Vagina (tissue), 2 donors: ENCODE measurements at regions of chr10 and their contacts with region 1.

Region 1: GRCh38 chr10:23095404-23095965 is at the start of gene MSRB2:
- DNase-seq: no peak
- H3K4me3 ChIP-seq: peak within 1 kb of the TSS; percentile 55 to 92
- H3K27ac ChIP-seq: peak within 1 kb of the TSS; percentile 95
- H3K4me1 ChIP-seq: peaks cover 24% of the 10 kb centered on the region
- H3K27me3 ChIP-seq: no peaks in the 10 kb centered on the region
- CTCF ChIP-seq: no peak
- POLR2A ChIP-seq: peak in 1 of 2 donors; percentile 94
- total RNA-seq, gene MSRB2: 15.2 TPM

Region 2: GRCh38 chr10:21533467-21534279 is 1561.8 kb before region 1 on chr10 and contains the start of gene MLLT10:
- intact Hi-C with region 1: loop called (anchors 10 kb)
- DNase-seq: peak in 1 of 2 donors; percentile 93
- H3K4me3 ChIP-seq: peak within 1 kb of the TSS; percentile 96 to 97
- H3K27ac ChIP-seq: peak within 1 kb of the TSS; percentile 96
- H3K4me1 ChIP-seq: peaks cover 40% of the 10 kb centered on the region
- H3K27me3 ChIP-seq: no peaks in the 10 kb centered on the region
- CTCF ChIP-seq: peak in 2 of 3 experiments; percentile 3 to 37
- POLR2A ChIP-seq: peak in 1 of 2 donors; percentile 86
- total RNA-seq, gene MLLT10: 53.3 TPM

Region 3: DNA sequence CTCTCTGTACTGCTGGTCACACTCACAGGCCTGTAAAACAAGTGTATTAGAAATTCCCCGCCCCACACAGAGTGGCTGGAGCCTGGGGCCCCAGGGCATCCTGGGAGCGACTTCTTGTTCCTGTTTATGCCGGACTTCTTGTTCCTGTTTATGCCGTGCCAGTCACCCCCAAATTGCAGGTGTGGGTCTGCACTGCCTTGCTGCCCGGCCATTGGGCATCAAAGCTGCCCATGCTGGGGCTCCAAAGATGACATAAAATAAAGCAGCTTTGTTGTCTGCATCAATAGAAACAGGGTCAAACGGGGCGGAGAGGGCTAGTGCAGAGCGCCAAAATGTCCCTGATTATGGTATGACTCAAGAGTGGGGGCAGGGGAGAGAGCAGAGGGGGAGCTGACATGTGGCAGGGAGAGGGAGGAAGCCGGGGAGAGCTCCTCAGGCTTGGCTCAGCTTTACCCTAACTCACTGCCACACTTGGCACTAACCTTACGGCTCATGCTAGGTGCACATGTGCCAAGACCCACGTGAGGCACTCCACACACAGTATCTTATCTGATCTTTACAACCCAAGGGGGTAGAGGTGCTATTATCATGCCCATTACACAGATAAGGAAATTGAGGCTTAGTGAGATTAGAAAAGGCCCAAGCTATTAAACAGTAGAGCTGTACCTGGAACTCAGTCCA is 479.5 kb before region 1 on chr10:
- intact Hi-C with region 1: no loop called
- DNase-seq: no peak
- H3K4me3 ChIP-seq: peak overlapping the region in 1 of 2 donors; percentile 3
- H3K27ac ChIP-seq: no peak overlapping the region
- H3K4me1 ChIP-seq: peaks cover 53% of the 10 kb centered on the region
- H3K27me3 ChIP-seq: no peaks in the 10 kb centered on the region
- CTCF ChIP-seq: no peak
- POLR2A ChIP-seq: no peak

Region 4: GRCh38 chr10:22837351-22837750 is 258.1 kb before region 1 on chr10:
- intact Hi-C with region 1: no loop called
- DNase-seq: no peak
- H3K4me3 ChIP-seq: no peak overlapping the region
- H3K27ac ChIP-seq: no peak overlapping the region
- H3K4me1 ChIP-seq: no peaks in the 10 kb centered on the region
- H3K27me3 ChIP-seq: no peaks in the 10 kb centered on the region
- CTCF ChIP-seq: no peak
- POLR2A ChIP-seq: no peak

Region 5: DNA sequence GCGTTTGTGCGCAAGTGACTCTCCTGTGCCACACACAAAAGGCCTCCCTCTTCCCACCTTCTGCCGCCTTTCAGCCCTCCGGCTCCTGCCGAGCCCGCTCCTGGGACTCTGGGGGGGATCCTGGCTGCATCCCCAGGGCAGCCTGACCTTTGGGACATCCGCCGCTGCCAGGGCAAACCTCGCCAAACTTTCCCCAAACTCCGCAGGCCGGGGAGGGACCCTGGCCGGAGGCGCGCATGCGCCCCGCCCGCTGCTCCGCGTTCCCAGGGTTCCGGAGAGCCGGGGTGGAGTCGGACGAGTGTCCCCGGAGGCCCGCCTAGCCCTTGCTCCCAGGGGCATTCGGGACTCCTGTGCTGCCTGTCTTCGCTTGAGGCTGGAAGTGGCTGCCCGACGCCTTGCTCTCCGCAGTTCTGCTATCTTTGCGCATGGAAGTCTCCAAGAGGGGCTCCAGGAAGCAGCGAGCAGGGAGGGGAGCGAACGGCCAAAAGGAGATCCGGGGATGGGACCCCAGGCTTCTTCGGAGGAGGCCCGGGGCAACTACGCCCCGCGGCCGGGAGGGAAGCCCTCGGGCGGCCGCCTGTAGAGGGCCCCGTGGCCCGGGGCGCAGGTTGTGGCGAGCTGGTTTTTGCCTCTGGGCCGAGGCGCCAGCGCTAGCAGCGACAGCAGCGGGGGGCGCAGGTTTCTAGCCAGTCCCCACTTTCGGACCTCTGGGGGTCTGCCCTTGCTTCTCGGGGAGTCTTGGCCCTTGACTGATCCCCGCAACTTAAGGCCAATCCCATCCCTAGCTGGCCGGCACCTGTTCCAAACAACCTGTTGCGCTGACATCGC is 103.7 kb after region 1 on chr10:
- intact Hi-C with region 1: no loop called
- DNase-seq: peak in 1 of 2 donors; percentile 58
- H3K4me3 ChIP-seq: no peak overlapping the region
- H3K27ac ChIP-seq: no peak overlapping the region
- H3K4me1 ChIP-seq: no peaks in the 10 kb centered on the region
- H3K27me3 ChIP-seq: no peaks in the 10 kb centered on the region
- CTCF ChIP-seq: no peak
- POLR2A ChIP-seq: no peak

Region 6: GRCh38 chr10:23438550-23439441 is 343.3 kb after region 1 on chr10 and contains the start of gene OTUD1:
- intact Hi-C with region 1: loop called (anchors 10 kb)
- DNase-seq: peak in 1 of 2 donors; percentile 94
- H3K4me3 ChIP-seq: peak within 1 kb of the TSS; percentile 83 to 91
- H3K27ac ChIP-seq: peak within 1 kb of the TSS; percentile 98
- H3K4me1 ChIP-seq: peaks cover 39% of the 10 kb centered on the region
- H3K27me3 ChIP-seq: no peaks in the 10 kb centered on the region
- CTCF ChIP-seq: no peak
- POLR2A ChIP-seq: peak in 1 of 2 donors; percentile 73
- total RNA-seq, gene OTUD1: 8.1 TPM